CD4-positive, alpha-beta T cell (primary cell): ENCODE measurements at regions of chr11 and their contacts with region 1.

Region 1: GRCh38 chr11:126268708-126269579 is at the starts of genes FOXRED1 and SRPRA:
- DNase-seq: peak; percentile 99 to 100 (median 100)
- ATAC-seq: peak; percentile 98
- H3K4me3 ChIP-seq: peak within 1 kb of the TSS; percentile 96
- H3K4me3 Mint-ChIP-seq: peak within 1 kb of the TSS; percentile 100
- H3K27ac ChIP-seq: peak within 1 kb of the TSS; percentile 71 to 95
- H3K27ac Mint-ChIP-seq: peak within 1 kb of the TSS; percentile 96
- H3K4me1 ChIP-seq: peaks cover 30% of the 10 kb centered on the region
- H3K4me1 Mint-ChIP-seq: peaks cover 38% of the 10 kb centered on the region
- H3K27me3 ChIP-seq: no peaks in the 10 kb centered on the region
- H3K27me3 Mint-ChIP-seq: no peaks in the 10 kb centered on the region
- CTCF ChIP-seq: no peak
- total RNA-seq, gene FOXRED1: 25.3 to 29.0 TPM
- total RNA-seq, gene SRPRA: 198 to 206 TPM

Region 2: DNA sequence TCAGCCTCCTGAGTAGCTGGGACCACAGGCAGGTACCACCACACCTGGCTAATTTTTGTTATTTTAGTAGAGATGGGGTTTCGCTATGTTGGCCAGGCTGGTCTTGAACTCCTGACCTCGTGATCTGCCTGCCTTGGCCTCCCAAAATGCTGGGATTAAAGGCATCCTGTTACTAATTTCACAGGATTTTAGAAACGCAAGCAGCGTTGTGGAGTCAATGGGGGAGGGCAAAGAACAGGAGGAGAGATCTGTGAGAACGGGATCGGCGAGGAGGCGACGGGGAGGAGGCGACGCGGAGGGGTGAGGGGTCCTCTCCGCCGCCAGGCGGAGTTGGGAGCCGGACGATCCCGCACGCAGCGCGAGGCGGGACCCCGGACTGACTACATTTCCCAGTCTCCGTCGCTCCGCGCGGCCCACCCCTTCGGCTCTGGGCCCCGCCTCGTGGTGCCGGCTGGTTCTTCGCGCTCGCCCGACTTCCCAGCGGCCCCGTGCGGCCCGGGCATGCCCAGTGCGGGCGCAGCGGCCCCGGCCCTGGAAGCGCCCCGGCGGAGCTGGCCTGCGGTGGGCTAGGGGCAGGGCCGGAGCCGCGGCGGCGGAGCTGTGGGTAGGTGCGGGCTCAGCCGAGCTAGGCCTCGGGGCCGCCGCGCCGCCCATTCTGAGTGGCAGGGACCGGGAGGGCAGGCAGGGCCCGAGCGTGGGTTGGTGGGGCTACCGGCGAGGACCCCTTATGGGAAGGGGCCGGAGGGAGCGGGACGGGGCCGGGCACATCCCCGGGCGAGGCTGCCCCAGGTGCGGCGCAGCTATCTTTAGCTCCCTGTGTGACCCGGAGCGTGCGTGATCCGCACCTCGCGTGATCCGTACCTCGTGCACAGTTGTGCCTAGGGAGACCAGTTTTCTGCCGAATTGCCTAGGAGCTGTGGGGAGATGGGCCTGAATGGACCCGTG is 699.7 kb before region 1 on chr11 and contains the start of gene EI24:
- CTCF ChIA-PET with region 1: no interaction called
- POLR2A ChIA-PET with region 1: interaction called, 6 read pairs
- intact Hi-C with region 1: loop called in 1 of 2 experiments (anchors 5 kb)
- DNase-seq: peak; percentile 76 to 95 (median 86)
- ATAC-seq: peak; percentile 94
- H3K4me3 ChIP-seq: peak within 1 kb of the TSS; percentile 80
- H3K4me3 Mint-ChIP-seq: peak within 1 kb of the TSS; percentile 95
- H3K27ac ChIP-seq: peak within 1 kb of the TSS; percentile 68 to 74
- H3K27ac Mint-ChIP-seq: peak within 1 kb of the TSS; percentile 84
- H3K4me1 ChIP-seq: peaks cover 18% of the 10 kb centered on the region
- H3K4me1 Mint-ChIP-seq: peaks cover 26% of the 10 kb centered on the region
- H3K27me3 ChIP-seq: no peaks in the 10 kb centered on the region
- H3K27me3 Mint-ChIP-seq: no peaks in the 10 kb centered on the region
- CTCF ChIP-seq: peak; percentile 76
- total RNA-seq, gene EI24: 21.0 to 22.8 TPM

Region 3: DNA sequence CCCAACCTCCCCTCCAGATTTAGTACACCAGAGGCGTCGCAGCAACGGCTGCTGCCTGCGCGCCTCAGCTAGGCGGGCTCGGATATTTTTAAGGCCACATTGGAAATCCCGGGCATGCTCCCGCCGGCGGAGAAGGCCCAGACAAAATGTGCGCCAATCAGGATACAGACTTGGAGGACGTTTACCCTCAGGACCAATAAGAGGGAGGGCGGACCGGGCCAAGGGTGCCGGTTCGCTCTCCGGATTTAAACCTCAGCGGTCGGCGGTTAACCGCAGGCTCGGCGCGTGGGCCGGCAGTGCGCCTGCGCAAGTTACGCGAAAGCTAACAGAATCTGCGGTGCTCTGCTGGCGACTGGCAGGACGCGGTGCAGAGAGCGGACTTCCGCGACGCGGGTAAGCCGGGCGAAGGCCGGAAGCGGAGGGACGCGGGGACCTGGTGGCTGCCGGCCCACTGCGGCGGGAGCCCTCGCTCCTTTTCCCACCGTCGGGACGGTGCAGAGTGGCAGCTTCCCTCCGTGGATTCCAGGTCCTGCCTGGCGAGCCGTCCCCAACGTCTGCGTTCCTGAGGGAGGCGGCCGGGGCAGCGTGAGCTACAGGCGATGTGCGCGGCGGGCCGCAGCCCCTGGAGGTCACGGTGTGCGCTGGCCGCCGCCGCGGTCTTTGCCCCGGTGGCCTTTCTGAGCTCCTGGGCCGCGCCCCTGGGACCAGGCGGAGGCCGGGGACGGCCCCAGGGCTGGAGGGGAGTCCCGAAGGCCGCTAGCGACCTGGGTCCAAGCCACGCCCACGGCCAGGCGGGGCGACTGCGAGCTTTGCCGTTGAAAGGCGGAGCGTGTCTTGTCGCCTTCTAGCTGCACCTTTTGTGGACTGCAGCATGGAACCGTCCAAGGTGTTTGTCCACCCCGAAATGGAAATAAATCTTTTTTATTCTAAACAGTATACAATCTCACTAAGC is 381.3 kb before region 1 on chr11 and contains the start of gene HYLS1:
- CTCF ChIA-PET with region 1: no interaction called
- POLR2A ChIA-PET with region 1: interaction called, 5 read pairs
- intact Hi-C with region 1: loop called in 1 of 2 experiments (anchors 5 kb)
- DNase-seq: peak; percentile 87 to 98 (median 91)
- ATAC-seq: peak; percentile 88
- H3K4me3 ChIP-seq: peak within 1 kb of the TSS; percentile 63
- H3K4me3 Mint-ChIP-seq: peak within 1 kb of the TSS; percentile 95
- H3K27ac ChIP-seq: peak within 1 kb of the TSS; percentile 71 to 78
- H3K27ac Mint-ChIP-seq: peak within 1 kb of the TSS; percentile 92
- H3K4me1 ChIP-seq: peaks cover 20% of the 10 kb centered on the region
- H3K4me1 Mint-ChIP-seq: peaks cover 50% of the 10 kb centered on the region
- H3K27me3 ChIP-seq: no peaks in the 10 kb centered on the region
- H3K27me3 Mint-ChIP-seq: no peaks in the 10 kb centered on the region
- CTCF ChIP-seq: no peak
- total RNA-seq, gene HYLS1: 1.2 to 1.3 TPM

Region 4: DNA sequence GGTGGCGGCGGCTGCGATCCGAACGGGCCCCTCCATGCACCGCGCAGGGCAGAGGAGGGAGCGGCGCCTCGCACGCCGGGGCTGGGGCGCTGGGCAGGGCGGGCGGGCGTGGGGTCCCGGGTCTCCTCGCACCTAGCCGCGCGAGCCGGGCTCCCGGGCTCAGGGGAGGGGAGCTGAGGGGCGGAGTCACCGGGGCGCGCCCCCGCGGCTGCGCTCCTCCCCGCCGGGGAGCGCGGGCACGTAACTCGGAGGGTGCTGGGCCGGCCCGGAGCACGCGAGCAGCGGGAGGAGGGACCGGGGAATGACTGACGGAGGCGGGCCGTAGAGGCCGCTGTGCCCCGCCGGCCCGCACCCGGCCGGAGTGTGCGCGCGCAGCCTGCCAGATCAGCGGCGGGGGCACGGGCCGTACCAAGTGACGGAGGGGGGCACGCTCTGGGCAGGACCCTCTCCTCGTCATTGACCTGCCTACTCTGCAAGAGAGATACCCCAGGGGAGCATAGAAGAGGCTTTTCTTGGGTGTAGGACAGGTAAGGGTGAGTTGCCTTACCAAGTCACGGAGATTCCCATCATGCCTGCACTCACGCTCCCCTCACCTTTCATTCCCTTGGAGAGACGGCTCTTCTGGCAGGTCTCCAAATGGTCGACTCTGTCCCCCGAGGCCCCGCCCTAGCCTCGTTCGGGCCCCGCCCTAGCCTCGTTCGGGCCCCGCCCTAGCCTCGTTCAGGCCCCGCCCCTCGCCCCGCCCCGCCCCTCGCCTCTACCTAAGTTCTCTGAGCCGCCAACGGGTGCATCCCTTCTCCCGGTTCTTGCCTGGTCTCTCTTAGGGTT is 206.1 kb before region 1 on chr11 and contains the start of gene CDON:
- CTCF ChIA-PET with region 1: no interaction called
- POLR2A ChIA-PET with region 1: no interaction called
- intact Hi-C with region 1: loop called in 1 of 2 experiments (anchors 5 kb)
- DNase-seq: peak; percentile 84 to 97 (median 90)
- ATAC-seq: peak; percentile 85
- H3K4me3 ChIP-seq: peak within 1 kb of the TSS; percentile 55
- H3K4me3 Mint-ChIP-seq: peak within 1 kb of the TSS; percentile 93
- H3K27ac ChIP-seq: peak within 1 kb of the TSS; percentile 55 to 84
- H3K27ac Mint-ChIP-seq: peak within 1 kb of the TSS; percentile 85
- H3K4me1 ChIP-seq: peaks cover 13% of the 10 kb centered on the region
- H3K4me1 Mint-ChIP-seq: peaks cover 16% of the 10 kb centered on the region
- H3K27me3 ChIP-seq: peaks cover 0 to 6% of the 10 kb centered on the region in 2 experiments
- H3K27me3 Mint-ChIP-seq: peaks cover 13% of the 10 kb centered on the region
- CTCF ChIP-seq: no peak
- total RNA-seq, gene CDON: 1.9 to 2.7 TPM

Region 5: GRCh38 chr11:126282736-126283591 is 14.0 kb after region 1 on chr11 and contains the start of gene TIRAP:
- CTCF ChIA-PET with region 1: interaction called, 3 read pairs
- POLR2A ChIA-PET with region 1: interaction called, 77 read pairs
- intact Hi-C with region 1: loop called (anchors 1 kb)
- DNase-seq: peak; percentile 47 to 84 (median 58)
- ATAC-seq: peak; percentile 54
- H3K4me3 ChIP-seq: peak within 1 kb of the TSS; percentile 89
- H3K4me3 Mint-ChIP-seq: peak within 1 kb of the TSS; percentile 95
- H3K27ac ChIP-seq: peak within 1 kb of the TSS; percentile 80 to 89
- H3K27ac Mint-ChIP-seq: peak within 1 kb of the TSS; percentile 99
- H3K4me1 ChIP-seq: peaks cover 56% of the 10 kb centered on the region
- H3K4me1 Mint-ChIP-seq: peaks cover 59% of the 10 kb centered on the region
- H3K27me3 ChIP-seq: no peaks in the 10 kb centered on the region
- H3K27me3 Mint-ChIP-seq: no peaks in the 10 kb centered on the region
- CTCF ChIP-seq: no peak
- total RNA-seq, gene TIRAP: 7.7 to 7.9 TPM

Region 6: GRCh38 chr11:126431401-126432064 is 162.6 kb after region 1 on chr11:
- CTCF ChIA-PET with region 1: no interaction called
- POLR2A ChIA-PET with region 1: no interaction called
- intact Hi-C with region 1: no loop called
- DNase-seq: no peak
- ATAC-seq: no peak
- H3K4me3 ChIP-seq: no peak overlapping the region
- H3K4me3 Mint-ChIP-seq: no peak overlapping the region
- H3K27ac ChIP-seq: no peak overlapping the region
- H3K27ac Mint-ChIP-seq: no peak overlapping the region
- H3K4me1 ChIP-seq: no peaks in the 10 kb centered on the region
- H3K4me1 Mint-ChIP-seq: no peaks in the 10 kb centered on the region
- H3K27me3 ChIP-seq: no peaks in the 10 kb centered on the region
- H3K27me3 Mint-ChIP-seq: no peaks in the 10 kb centered on the region
- CTCF ChIP-seq: no peak

Region 7: GRCh38 chr11:126949066-126949891 is 680.3 kb after region 1 on chr11:
- CTCF ChIA-PET with region 1: no interaction called
- POLR2A ChIA-PET with region 1: no interaction called
- intact Hi-C with region 1: no loop called
- DNase-seq: no peak
- ATAC-seq: no peak
- H3K4me3 ChIP-seq: no peak overlapping the region
- H3K4me3 Mint-ChIP-seq: no peak overlapping the region
- H3K27ac ChIP-seq: no peak overlapping the region
- H3K27ac Mint-ChIP-seq: no peak overlapping the region
- H3K4me1 ChIP-seq: no peaks in the 10 kb centered on the region
- H3K4me1 Mint-ChIP-seq: no peaks in the 10 kb centered on the region
- H3K27me3 ChIP-seq: no peaks in the 10 kb centered on the region
- H3K27me3 Mint-ChIP-seq: no peaks in the 10 kb centered on the region
- CTCF ChIP-seq: no peak

Region 8: GRCh38 chr11:127252321-127252720 is 983.4 kb after region 1 on chr11:
- CTCF ChIA-PET with region 1: no interaction called
- POLR2A ChIA-PET with region 1: no interaction called
- intact Hi-C with region 1: no loop called
- DNase-seq: no peak
- ATAC-seq: no peak
- H3K4me3 ChIP-seq: no peak overlapping the region
- H3K4me3 Mint-ChIP-seq: no peak overlapping the region
- H3K27ac ChIP-seq: no peak overlapping the region
- H3K27ac Mint-ChIP-seq: no peak overlapping the region
- H3K4me1 ChIP-seq: no peaks in the 10 kb centered on the region
- H3K4me1 Mint-ChIP-seq: no peaks in the 10 kb centered on the region
- H3K27me3 ChIP-seq: no peaks in the 10 kb centered on the region
- H3K27me3 Mint-ChIP-seq: no peaks in the 10 kb centered on the region
- CTCF ChIP-seq: no peak